Caco-2 (cell line): ENCODE measurements at regions of chr17 and their contacts with region 1.

Region 1: DNA sequence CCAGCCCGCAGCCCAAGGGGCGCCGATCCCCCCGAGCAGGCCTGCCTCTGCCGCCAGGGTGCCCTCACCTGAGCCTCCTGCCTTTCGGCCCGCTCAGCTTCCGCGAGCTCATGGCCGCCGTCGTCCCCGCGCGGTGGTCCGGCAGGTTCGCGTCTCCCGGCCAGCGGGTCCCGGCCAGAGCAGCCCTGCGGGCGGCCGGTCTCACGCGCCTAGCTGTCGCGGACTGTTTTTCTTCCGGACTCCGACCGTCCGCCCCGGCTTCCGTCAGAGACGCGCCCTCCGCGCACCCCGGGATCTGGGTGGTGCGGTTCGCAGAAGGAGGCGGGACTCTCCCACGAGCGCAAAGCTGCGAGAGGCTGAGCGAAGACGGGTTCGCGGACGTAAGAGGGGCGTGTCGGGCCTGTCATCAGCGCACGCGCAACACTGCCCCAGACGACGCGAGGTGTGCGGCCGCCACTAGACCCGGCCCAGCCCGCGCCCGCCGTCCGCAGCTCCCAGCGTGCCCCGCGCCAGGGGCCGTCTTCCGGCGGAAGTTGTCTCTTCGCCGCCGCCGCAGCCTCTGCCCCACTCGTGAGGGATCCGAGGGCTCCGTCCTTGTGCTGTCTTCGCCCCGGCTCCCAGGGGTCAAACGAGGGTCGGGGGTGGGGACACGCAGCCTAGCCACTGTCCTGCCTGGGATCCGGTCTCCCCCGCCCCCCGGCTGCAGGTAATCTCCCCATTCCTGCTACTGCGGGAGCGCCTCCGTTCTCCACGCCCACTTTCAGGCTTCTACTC is at the start of gene INPP5K:
- DNase-seq: peak; percentile 98
- H3K4me3 ChIP-seq: peak within 1 kb of the TSS; percentile 93
- H3K4me3 Mint-ChIP-seq: peak within 1 kb of the TSS; percentile 86
- H3K27ac Mint-ChIP-seq: peak within 1 kb of the TSS; percentile 87
- H3K4me1 ChIP-seq: peaks cover 13% of the 10 kb centered on the region
- H3K4me1 Mint-ChIP-seq: peaks cover 15% of the 10 kb centered on the region
- H3K27me3 ChIP-seq: no peaks in the 10 kb centered on the region
- H3K27me3 Mint-ChIP-seq: no peaks in the 10 kb centered on the region
- CTCF ChIP-seq: no peak
- total RNA-seq, gene INPP5K: 24.1 and 27.3 TPM in 2 replicates

Region 2: DNA sequence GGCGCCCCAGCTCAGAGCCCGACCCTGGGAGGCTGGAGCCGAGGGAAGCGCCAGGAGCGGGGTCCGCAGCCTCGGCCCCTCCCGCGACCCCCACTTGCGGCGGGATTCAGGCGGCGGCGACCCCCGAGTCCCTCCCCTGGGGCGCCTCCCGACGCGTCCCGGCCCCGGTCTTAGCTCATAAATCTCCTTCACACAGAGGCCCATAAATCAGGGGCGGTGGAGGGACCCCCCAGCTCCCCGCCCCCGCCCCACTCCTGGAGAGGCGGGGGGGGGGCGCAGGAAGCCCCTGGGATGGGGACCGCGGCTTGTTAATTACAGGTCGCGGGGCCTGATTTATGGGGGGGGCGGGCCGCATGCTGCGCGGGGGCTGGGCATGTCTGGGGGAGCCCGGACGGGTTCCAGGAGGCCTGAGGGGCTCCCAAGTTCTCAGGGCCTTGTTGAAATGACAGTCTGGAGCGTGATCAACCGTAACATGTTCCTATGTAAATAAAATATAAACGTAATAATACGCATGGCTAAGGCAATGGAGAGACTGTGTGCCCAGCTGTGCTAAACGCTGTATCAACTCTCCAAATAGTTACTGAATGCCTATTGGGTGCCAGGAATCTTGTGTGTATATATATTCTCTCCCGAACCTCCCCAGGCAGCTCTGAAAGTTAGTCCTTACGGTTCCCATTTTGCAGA is 256.3 kb before region 1 on chr17:
- CTCF ChIA-PET with region 1: interaction called, 5 read pairs
- POLR2A ChIA-PET with region 1: no interaction called
- intact Hi-C with region 1: loop called (anchors 2 kb)
- DNase-seq: no peak
- H3K4me3 ChIP-seq: peak overlapping the region; percentile 54
- H3K4me3 Mint-ChIP-seq: peak overlapping the region; percentile 89
- H3K27ac Mint-ChIP-seq: no peak overlapping the region
- H3K4me1 ChIP-seq: no peaks in the 10 kb centered on the region
- H3K4me1 Mint-ChIP-seq: no peaks in the 10 kb centered on the region
- H3K27me3 ChIP-seq: no peaks in the 10 kb centered on the region
- H3K27me3 Mint-ChIP-seq: no peaks in the 10 kb centered on the region
- CTCF ChIP-seq: no peak

Region 3: DNA sequence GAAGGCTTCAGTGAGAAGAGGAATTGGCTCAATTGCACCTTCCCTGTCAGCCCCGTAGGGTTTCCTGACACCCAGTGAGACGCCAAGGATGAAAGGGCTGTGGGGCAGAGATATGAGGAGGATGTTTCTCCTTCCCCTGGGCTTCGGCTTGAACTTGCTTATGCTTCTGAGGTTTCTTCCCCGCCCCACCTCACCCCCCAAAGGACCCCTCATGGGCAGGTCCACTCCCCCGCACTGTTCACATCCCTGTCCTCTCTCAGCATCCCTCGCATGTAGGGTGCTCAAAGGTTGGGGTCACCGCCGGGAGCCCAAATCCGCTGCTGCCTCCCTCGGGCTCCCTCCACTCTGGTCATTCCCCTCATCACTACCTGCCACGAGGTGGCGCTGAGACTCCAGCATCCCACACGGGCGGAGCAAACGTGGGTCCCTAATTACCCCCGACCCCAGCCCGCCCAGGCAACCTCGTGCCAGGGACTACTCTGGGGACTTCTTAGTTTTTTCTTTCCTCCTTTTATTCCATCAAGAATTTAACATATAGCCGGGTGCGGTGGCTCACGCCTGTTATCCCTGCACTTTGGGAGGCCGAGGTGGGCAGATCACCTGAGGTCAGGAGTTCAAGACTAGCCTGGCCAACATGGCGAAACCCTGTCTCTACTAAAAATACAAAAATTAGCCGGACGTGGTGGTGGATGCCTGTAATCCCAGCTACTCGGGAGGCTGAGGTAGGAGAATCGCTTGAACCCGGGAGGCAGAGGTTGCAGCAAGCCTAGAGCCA is 240.4 kb before region 1 on chr17:
- CTCF ChIA-PET with region 1: no interaction called
- POLR2A ChIA-PET with region 1: no interaction called
- intact Hi-C with region 1: loop called (anchors 2 kb)
- DNase-seq: peak; percentile 70 to 80
- H3K4me3 ChIP-seq: no peak overlapping the region
- H3K4me3 Mint-ChIP-seq: no peak overlapping the region
- H3K27ac Mint-ChIP-seq: no peak overlapping the region
- H3K4me1 ChIP-seq: no peaks in the 10 kb centered on the region
- H3K4me1 Mint-ChIP-seq: no peaks in the 10 kb centered on the region
- H3K27me3 ChIP-seq: no peaks in the 10 kb centered on the region
- H3K27me3 Mint-ChIP-seq: no peaks in the 10 kb centered on the region
- CTCF ChIP-seq: peak; percentile 87 to 91

Region 4: GRCh38 chr17:1365445-1366039 is 151.0 kb before region 1 on chr17:
- CTCF ChIA-PET with region 1: interaction called, 28 read pairs
- POLR2A ChIA-PET with region 1: interaction called, 4 read pairs
- intact Hi-C with region 1: loop called (anchors 1 kb)
- DNase-seq: peak; percentile 65 to 75
- H3K4me3 ChIP-seq: no peak overlapping the region
- H3K4me3 Mint-ChIP-seq: no peak overlapping the region
- H3K27ac Mint-ChIP-seq: no peak overlapping the region
- H3K4me1 ChIP-seq: no peaks in the 10 kb centered on the region; the same call in 1 of the 2 replicates
- H3K4me1 Mint-ChIP-seq: peaks cover 12% of the 10 kb centered on the region
- H3K27me3 ChIP-seq: no peaks in the 10 kb centered on the region
- H3K27me3 Mint-ChIP-seq: no peaks in the 10 kb centered on the region
- CTCF ChIP-seq: peak; percentile 84 to 88

Region 5: DNA sequence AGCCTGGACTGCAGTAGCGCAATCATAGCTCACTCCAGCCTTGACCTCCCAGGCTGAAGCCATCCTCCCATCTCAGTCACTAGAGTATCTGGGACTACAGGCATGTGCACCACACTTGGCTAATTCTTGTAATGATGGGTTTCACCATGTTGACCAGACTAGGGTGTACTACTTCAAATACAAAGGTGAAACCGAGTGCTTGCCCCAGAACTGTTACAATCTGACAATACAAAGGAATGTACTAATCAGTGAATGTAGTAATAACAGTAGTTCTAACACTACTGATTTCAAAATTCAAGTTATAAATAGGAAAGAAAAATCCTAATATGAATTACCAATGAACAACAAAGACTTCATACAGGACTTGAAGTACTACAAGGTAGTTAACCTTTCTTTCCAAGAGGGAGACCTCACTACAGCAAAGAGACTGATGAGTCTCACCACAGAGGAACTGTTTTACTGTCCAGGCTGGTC is 84.9 kb before region 1 on chr17:
- CTCF ChIA-PET with region 1: no interaction called
- POLR2A ChIA-PET with region 1: no interaction called
- intact Hi-C with region 1: no loop called
- DNase-seq: no peak
- H3K4me3 ChIP-seq: no peak overlapping the region
- H3K4me3 Mint-ChIP-seq: no peak overlapping the region
- H3K27ac Mint-ChIP-seq: no peak overlapping the region
- H3K4me1 ChIP-seq: 0 out of 2 replicates have a peak, but pooled peaks cover 4% of the 10 kb centered on the region
- H3K4me1 Mint-ChIP-seq: peaks cover 3% of the 10 kb centered on the region
- H3K27me3 ChIP-seq: no peaks in the 10 kb centered on the region
- H3K27me3 Mint-ChIP-seq: no peaks in the 10 kb centered on the region
- CTCF ChIP-seq: no peak

Region 6: GRCh38 chr17:1455797-1456599 is 60.6 kb before region 1 on chr17 and contains the start of gene CRK:
- CTCF ChIA-PET with region 1: interaction called, 17 read pairs
- POLR2A ChIA-PET with region 1: interaction called, 7 read pairs
- intact Hi-C with region 1: loop called (anchors 2 kb)
- DNase-seq: peak; percentile 96 to 99
- H3K4me3 ChIP-seq: peak within 1 kb of the TSS; percentile 99
- H3K4me3 Mint-ChIP-seq: peak within 1 kb of the TSS; percentile 93
- H3K27ac Mint-ChIP-seq: peak within 1 kb of the TSS; percentile 94
- H3K4me1 ChIP-seq: peaks cover 9% of the 10 kb centered on the region; the same call in 1 of the 2 replicates
- H3K4me1 Mint-ChIP-seq: peaks cover 13% of the 10 kb centered on the region
- H3K27me3 ChIP-seq: no peaks in the 10 kb centered on the region
- H3K27me3 Mint-ChIP-seq: no peaks in the 10 kb centered on the region
- CTCF ChIP-seq: no peak
- total RNA-seq, gene CRK: 70.0 and 72.3 TPM in 2 replicates

Region 7: GRCh38 chr17:1484676-1485421 is 31.7 kb before region 1 on chr17:
- CTCF ChIA-PET with region 1: interaction called, 5 read pairs
- POLR2A ChIA-PET with region 1: interaction called, 10 read pairs
- intact Hi-C with region 1: no loop called
- DNase-seq: peak; percentile 85
- H3K4me3 ChIP-seq: peak overlapping the region; percentile 77
- H3K4me3 Mint-ChIP-seq: peak overlapping the region; percentile 83
- H3K27ac Mint-ChIP-seq: peak overlapping the region; percentile 91
- H3K4me1 ChIP-seq: peaks cover 17% of the 10 kb centered on the region
- H3K4me1 Mint-ChIP-seq: peaks cover 9% of the 10 kb centered on the region
- H3K27me3 ChIP-seq: no peaks in the 10 kb centered on the region
- H3K27me3 Mint-ChIP-seq: no peaks in the 10 kb centered on the region
- CTCF ChIP-seq: peak in 1 of 2 experiments; percentile 49

Region 8: GRCh38 chr17:1597861-1598342 is 81.3 kb after region 1 on chr17:
- CTCF ChIA-PET with region 1: no interaction called
- POLR2A ChIA-PET with region 1: no interaction called
- intact Hi-C with region 1: no loop called
- DNase-seq: peak; percentile 86 to 91
- H3K4me3 ChIP-seq: no peak overlapping the region
- H3K4me3 Mint-ChIP-seq: peak overlapping the region; percentile 65
- H3K27ac Mint-ChIP-seq: peak overlapping the region; percentile 98
- H3K4me1 ChIP-seq: peaks cover 48% of the 10 kb centered on the region
- H3K4me1 Mint-ChIP-seq: peaks cover 22% of the 10 kb centered on the region
- H3K27me3 ChIP-seq: no peaks in the 10 kb centered on the region
- H3K27me3 Mint-ChIP-seq: no peaks in the 10 kb centered on the region
- CTCF ChIP-seq: no peak